Activated CD4-positive, alpha-beta memory T cell treated with anti-CD3 and anti-CD28 coated beads for 36 hours (primary cell): ENCODE measurements at regions of chr1 and their contacts with region 1.

Region 1: DNA sequence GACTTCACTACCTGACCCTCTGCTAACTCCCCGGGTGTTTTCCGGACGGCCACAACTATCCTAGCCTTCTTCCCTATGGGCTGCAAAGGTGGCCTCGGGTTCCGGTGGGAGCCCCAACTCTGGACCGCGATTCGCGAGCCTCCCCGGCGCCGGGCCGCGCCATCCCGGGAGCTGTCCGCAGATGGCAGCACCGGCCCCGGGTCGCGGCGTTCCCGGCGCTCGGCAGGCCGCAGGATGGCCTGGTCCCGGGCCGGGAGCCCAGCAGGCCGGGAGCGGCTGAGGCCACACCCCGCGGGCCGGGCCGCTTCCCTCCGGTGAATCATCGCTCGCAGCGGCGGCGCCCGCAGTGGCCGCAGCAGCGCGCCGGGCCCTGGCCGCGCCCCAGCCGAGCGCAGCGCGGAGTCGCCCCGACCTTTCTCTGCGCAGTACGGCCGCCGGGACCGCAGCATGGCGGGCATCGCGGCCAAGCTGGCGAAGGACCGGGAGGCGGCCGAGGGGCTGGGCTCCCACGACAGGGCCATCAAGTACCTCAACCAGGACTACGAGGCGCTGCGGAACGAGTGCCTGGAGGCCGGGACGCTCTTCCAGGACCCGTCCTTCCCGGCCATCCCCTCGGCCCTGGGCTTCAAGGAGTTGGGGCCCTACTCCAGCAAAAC is at the start of gene CAPN2:
- DNase-seq: peak; percentile 75
- H3K4me3 Mint-ChIP-seq: peak within 1 kb of the TSS; percentile 85
- H3K27ac Mint-ChIP-seq: peak within 1 kb of the TSS; percentile 80
- H3K4me1 Mint-ChIP-seq: peaks cover 58% of the 10 kb centered on the region
- H3K27me3 Mint-ChIP-seq: no peaks in the 10 kb centered on the region
- total RNA-seq, gene CAPN2: 61.2 to 64.5 TPM

Region 2: GRCh38 chr1:223683586-223684487 is 28.5 kb before region 1 on chr1:
- CTCF ChIA-PET with region 1: no interaction called
- POLR2A ChIA-PET with region 1: no interaction called
- intact Hi-C with region 1: no loop called
- DNase-seq: peak; percentile 64
- H3K4me3 Mint-ChIP-seq: no peak overlapping the region
- H3K27ac Mint-ChIP-seq: no peak overlapping the region
- H3K4me1 Mint-ChIP-seq: no peaks in the 10 kb centered on the region
- H3K27me3 Mint-ChIP-seq: peaks cover 2% of the 10 kb centered on the region

Region 3: GRCh38 chr1:223726380-223727001 is 14.2 kb after region 1 on chr1:
- CTCF ChIA-PET with region 1: interaction called, 5 read pairs
- POLR2A ChIA-PET with region 1: interaction called, 4 read pairs
- intact Hi-C with region 1: loop called (anchors 1 kb)
- DNase-seq: peak; percentile 96
- H3K4me3 Mint-ChIP-seq: peak overlapping the region; percentile 54
- H3K27ac Mint-ChIP-seq: peak overlapping the region; percentile 71
- H3K4me1 Mint-ChIP-seq: peaks cover 74% of the 10 kb centered on the region
- H3K27me3 Mint-ChIP-seq: no peaks in the 10 kb centered on the region